ENCODE measurements at regions of chr18 and their contacts with region 1.

Region 1: DNA sequence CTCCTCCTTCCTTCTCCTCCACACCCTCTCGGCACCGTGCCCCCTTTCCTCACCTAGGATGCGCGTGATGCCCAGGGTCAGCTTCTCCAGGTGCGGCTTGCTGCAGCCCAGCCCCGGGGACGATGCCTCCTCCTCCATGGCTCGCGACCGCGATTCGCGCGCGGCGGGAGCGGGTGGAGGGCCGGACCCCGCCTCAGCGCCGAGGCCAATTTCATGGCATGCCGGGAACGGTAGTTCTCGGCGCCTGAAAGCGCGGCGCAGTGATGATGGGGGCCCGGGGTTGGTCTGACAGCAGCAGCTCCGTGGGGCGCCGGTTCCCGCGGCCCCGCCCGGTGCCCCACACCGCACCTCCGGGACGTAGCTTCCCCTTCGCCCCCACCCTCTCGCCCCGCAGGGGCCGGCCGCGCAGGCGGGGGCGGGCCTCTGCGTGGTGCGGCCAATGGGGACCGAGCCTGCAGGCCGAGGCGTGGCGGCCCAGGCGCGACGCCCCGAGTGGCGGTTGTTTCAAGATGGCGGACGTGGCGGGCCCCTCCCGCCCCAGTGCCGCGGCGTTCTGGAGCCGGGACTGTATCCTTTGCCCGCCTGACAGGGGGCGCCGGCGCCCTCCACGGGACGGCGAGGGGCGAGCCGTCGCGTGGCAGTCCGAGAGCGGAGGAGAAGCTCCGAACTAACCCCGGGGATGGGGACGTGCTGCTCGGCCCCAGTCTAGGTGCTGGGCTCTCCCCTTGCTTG is at the starts of genes KIAA1328 and TPGS2:
- DNase-seq: peak; percentile 75 to 94 (median 85)
- ATAC-seq: peak; percentile 90
- H3K4me3 ChIP-seq: peak within 1 kb of the TSS; percentile 99
- H3K4me3 Mint-ChIP-seq: peak within 1 kb of the TSS; percentile 81
- H3K27ac ChIP-seq: peak within 1 kb of the TSS; percentile 70 to 71
- H3K27ac Mint-ChIP-seq: peak within 1 kb of the TSS; percentile 93
- H3K4me1 ChIP-seq: peaks cover 22% of the 10 kb centered on the region
- H3K4me1 Mint-ChIP-seq: peaks cover 42% of the 10 kb centered on the region
- H3K27me3 ChIP-seq: no peaks in the 10 kb centered on the region
- H3K27me3 Mint-ChIP-seq: no peaks in the 10 kb centered on the region
- CTCF ChIP-seq: peak; percentile 58
- total RNA-seq, gene KIAA1328: 6.9 to 7.0 TPM
- total RNA-seq, gene TPGS2: 14.5 to 16.4 TPM

Region 2: DNA sequence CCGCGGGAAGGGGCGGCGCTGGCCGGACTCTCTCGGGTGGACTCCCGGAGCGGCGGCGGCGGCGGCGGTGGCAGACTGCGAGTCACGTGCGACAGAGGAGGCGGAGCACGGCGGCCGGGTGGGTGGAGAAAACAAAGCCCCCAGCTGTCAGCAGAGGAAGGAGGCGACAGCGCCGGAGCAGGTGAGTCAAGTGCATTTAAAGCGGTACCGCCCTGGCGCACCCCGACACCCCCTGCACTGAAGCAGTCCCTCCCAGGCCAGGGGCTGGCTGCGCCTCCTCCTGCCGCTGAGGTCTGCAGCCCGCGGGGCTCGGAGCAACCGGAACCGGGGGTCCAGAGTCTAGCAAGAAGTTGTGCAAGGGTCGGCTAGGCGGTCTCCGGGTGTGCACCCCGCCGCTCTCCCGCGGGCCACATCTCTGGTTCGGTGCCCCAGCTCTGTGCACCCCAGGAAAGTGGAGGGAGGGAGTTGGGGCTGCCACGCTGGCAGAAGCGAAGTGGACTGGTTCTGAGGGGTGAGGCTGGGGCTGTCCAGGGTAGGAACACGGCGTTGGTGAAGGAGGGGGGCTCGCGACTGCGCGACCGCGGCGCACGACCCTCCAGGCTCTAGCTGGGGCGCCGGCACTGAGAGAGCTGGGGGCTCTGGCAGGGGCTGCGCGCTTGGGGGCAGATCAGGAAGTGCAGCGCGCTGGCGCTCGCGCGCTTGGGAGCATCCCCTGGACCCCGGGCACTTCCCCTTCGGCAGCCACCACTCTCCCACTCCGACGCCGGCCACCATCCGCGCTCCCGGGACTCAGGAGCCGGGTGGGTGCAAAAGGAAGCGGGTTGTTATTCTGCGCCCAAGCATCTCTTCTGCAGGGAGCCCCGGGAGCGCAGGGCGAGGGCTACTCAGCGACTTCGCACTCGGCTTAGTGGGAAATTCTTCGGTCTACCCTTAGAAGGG is 1851.6 kb before region 1 on chr18:
- CTCF ChIA-PET with region 1: no interaction called
- POLR2A ChIA-PET with region 1: no interaction called
- intact Hi-C with region 1: loop called in 1 of 2 experiments (anchors 5 kb)
- DNase-seq: peak; percentile 55 to 89 (median 85)
- ATAC-seq: peak; percentile 81
- H3K4me3 ChIP-seq: peak overlapping the region; percentile 87 to 93
- H3K4me3 Mint-ChIP-seq: peak overlapping the region; percentile 96
- H3K27ac ChIP-seq: peak overlapping the region in 1 of 2 experiments; percentile 35
- H3K27ac Mint-ChIP-seq: peak overlapping the region; percentile 70
- H3K4me1 ChIP-seq: peaks cover 11% of the 10 kb centered on the region
- H3K4me1 Mint-ChIP-seq: peaks cover 26% of the 10 kb centered on the region
- H3K27me3 ChIP-seq: no peaks in the 10 kb centered on the region
- H3K27me3 Mint-ChIP-seq: no peaks in the 10 kb centered on the region
- CTCF ChIP-seq: no peak

Region 3: GRCh38 chr18:35580701-35581539 is 1247.9 kb before region 1 on chr18:
- CTCF ChIA-PET with region 1: no interaction called
- POLR2A ChIA-PET with region 1: no interaction called
- intact Hi-C with region 1: loop called in 1 of 2 experiments (anchors 10 kb)
- DNase-seq: peak; percentile 26 to 83 (median 59)
- ATAC-seq: peak; percentile 73
- H3K4me3 ChIP-seq: peak overlapping the region; percentile 53 to 65
- H3K4me3 Mint-ChIP-seq: peak overlapping the region; percentile 75
- H3K27ac ChIP-seq: peak overlapping the region; percentile 57 to 65
- H3K27ac Mint-ChIP-seq: peak overlapping the region; percentile 68
- H3K4me1 ChIP-seq: peaks cover 13% of the 10 kb centered on the region
- H3K4me1 Mint-ChIP-seq: peaks cover 27% of the 10 kb centered on the region
- H3K27me3 ChIP-seq: no peaks in the 10 kb centered on the region
- H3K27me3 Mint-ChIP-seq: peaks cover 14% of the 10 kb centered on the region
- CTCF ChIP-seq: no peak

Region 4: GRCh38 chr18:36067055-36067957 is 761.5 kb before region 1 on chr18 and contains the start of gene RPRD1A:
- CTCF ChIA-PET with region 1: no interaction called
- POLR2A ChIA-PET with region 1: no interaction called
- intact Hi-C with region 1: loop called (anchors 1 to 5 kb)
- DNase-seq: peak; percentile 92 to 99 (median 97)
- ATAC-seq: peak; percentile 93
- H3K4me3 ChIP-seq: peak within 1 kb of the TSS; percentile 95 to 98
- H3K4me3 Mint-ChIP-seq: peak within 1 kb of the TSS; percentile 94
- H3K27ac ChIP-seq: peak within 1 kb of the TSS; percentile 88 to 89
- H3K27ac Mint-ChIP-seq: peak within 1 kb of the TSS; percentile 96
- H3K4me1 ChIP-seq: peaks cover 29% of the 10 kb centered on the region
- H3K4me1 Mint-ChIP-seq: peaks cover 46% of the 10 kb centered on the region
- H3K27me3 ChIP-seq: no peaks in the 10 kb centered on the region
- H3K27me3 Mint-ChIP-seq: peaks cover 3% of the 10 kb centered on the region
- CTCF ChIP-seq: no peak
- total RNA-seq, gene RPRD1A: 13.8 to 15.8 TPM

Region 5: GRCh38 chr18:36809590-36810381 is 19.0 kb before region 1 on chr18:
- CTCF ChIA-PET with region 1: interaction called, 18 read pairs
- POLR2A ChIA-PET with region 1: no interaction called
- intact Hi-C with region 1: no loop called
- DNase-seq: peak in 8 of 9 experiments; percentile 2 to 77 (median 29)
- ATAC-seq: peak; percentile 98
- H3K4me3 ChIP-seq: no peak overlapping the region
- H3K4me3 Mint-ChIP-seq: no peak overlapping the region
- H3K27ac ChIP-seq: no peak overlapping the region
- H3K27ac Mint-ChIP-seq: no peak overlapping the region
- H3K4me1 ChIP-seq: no peaks in the 10 kb centered on the region
- H3K4me1 Mint-ChIP-seq: peaks cover 7% of the 10 kb centered on the region
- H3K27me3 ChIP-seq: no peaks in the 10 kb centered on the region
- H3K27me3 Mint-ChIP-seq: no peaks in the 10 kb centered on the region
- CTCF ChIP-seq: peak; percentile 92